Activated CD8-positive, alpha-beta T cell treated with anti-CD3 and anti-CD28 coated beads for 36 hours (primary cell): ENCODE measurements at regions of chr17 and their contacts with region 1.

Region 1: DNA sequence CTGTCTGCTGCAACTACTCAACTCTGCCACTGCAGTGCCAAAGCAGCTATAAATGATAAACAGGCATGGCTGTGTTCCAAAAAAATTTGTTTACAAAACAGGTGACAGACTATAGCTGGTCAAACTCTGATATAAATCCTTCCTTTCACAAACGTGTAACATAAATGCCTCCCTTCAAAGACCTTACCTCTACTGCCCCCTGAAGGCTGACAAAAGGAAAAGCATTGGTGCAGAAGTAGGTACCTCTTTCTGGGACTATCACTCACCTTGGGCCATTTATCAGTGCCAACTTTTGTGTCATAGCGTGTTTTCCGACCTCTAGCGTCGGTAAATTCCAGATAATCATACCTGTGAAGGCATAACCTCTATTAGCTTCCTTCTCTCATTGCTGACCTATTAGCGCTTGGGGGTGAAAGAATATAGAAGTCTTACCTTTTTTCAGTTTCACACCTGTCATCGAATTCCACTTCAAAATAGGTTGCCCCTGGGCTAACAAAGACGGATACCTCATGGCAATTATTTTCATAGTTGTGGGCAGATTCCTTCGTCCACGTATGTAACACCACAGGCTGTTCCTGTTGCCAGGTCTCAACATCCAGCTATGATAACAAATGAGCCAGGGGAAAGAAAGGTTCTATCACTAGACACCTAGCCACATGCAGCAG is 67.9 kb downstream of the ZZEF1 start:
- DNase-seq: no peak
- ATAC-seq: peak; percentile 75
- H3K4me3 Mint-ChIP-seq: no peak overlapping the region
- H3K27ac Mint-ChIP-seq: no peak overlapping the region
- H3K4me1 Mint-ChIP-seq: no peaks in the 10 kb centered on the region
- H3K27me3 Mint-ChIP-seq: no peaks in the 10 kb centered on the region
- CTCF ChIP-seq: peak; percentile 80

Region 2: DNA sequence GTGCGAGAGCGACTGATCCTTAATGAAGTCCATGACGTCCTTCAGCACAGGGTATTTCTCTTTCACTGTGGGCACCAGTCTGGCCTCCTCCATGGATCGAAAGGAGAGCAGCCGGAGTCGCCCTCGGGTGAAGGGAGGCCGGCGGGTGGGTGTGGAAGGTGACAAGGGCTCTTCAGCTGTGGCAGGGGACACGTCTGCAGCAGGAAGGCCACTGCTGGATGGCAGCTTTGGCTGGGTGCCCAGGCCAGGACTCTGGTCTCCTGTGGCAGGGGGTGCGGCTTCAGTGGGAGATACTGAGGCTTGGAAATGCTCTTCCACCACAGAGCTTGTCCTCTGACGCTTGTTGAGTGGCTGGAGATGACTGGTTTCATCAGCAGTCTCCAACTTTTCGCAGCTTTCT is 10.6 kb before region 1 on chr17:
- CTCF ChIA-PET with region 1: interaction called, 11 read pairs
- POLR2A ChIA-PET with region 1: interaction called, 4 read pairs
- intact Hi-C with region 1: no loop called
- DNase-seq: no peak
- ATAC-seq: no peak
- H3K4me3 Mint-ChIP-seq: no peak overlapping the region
- H3K27ac Mint-ChIP-seq: no peak overlapping the region
- H3K4me1 Mint-ChIP-seq: no peaks in the 10 kb centered on the region
- H3K27me3 Mint-ChIP-seq: no peaks in the 10 kb centered on the region
- CTCF ChIP-seq: no peak